GM13976 (cell line): ENCODE measurements at regions of chr14 and their contacts with region 1.

Region 1: DNA sequence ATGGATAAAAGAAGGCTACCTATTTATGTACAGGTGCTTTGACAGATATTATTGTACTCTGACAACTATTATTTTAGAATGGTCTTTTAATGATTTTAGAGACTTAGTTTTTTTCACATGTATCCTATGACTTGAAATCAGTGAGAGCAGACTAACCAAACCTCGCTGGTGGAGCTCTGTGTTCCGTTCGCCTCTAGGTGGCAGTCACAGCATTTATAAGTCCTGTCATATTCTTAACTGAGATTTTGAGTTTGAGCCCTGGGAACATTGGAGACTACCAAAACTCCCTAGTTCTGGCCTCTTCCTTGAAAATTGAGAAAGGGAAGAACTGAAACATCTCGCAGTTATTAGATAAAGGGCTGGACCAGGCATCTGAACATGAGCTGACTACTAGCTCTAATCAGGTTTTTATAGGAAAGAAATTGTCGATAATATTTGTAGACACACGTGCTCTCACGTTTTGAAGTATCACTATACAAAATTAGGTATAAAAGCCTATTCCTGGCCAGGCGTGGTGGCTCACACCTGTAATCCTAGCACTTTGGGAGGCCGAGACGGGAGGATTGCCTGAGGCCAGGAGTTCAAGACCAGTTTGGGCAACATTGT is 48.3 kb downstream of the TTLL5 start:
- DNase-seq: peak; percentile 57
- CTCF ChIP-seq: peak; percentile 72

Region 2: GRCh38 chr14:75315144-75315543 is 394.2 kb before region 1 on chr14:
- in situ Hi-C with region 1: no loop called
- DNase-seq: no peak
- CTCF ChIP-seq: no peak

Region 3: GRCh38 chr14:75654127-75654732 is 55.1 kb before region 1 on chr14:
- in situ Hi-C with region 1: no loop called
- DNase-seq: peak; percentile 78
- CTCF ChIP-seq: peak; percentile 89

Region 4: DNA sequence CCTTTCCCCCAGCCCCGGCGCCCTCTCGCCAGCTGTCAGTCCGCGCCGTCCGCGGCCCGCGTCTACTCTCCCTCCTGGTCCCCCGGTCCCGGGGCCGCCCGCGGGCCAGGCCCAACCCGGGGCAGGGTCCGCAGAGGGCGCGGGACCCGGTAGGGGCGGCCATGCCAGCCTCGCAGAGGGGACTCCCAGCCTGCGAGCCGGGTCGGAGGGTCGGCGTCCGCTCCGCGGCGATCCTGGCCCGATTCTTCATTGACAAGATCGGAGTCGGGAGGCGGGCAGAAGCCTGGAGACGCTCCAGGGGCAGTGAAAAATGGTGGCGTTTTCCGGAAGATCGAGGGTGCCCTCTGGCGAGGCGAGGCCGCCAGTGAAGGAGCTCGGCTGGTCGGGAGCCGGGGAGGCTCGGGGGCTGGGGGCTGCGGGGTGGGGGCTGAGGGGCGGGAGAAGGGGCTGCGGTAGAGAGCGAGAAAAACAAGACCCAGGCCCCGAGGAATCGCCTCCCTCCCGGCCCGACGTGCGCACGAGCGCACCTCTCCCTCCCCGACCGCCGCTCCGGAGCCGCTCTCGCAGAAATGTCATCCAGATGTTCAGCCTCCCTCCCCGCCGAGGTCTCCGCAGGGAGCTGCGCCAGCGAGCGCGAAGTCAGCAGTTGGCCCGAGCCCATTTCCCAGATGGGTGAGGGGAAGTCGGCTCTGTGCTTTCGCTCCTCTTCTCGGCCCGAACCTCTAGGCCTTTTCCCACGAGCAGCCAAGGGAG is 273.1 kb after region 1 on chr14:
- in situ Hi-C with region 1: loop called (anchors 10 kb)
- DNase-seq: peak; percentile 86
- CTCF ChIP-seq: peak; percentile 84

Region 5: GRCh38 chr14:76146976-76147375 is 437.7 kb after region 1 on chr14:
- in situ Hi-C with region 1: no loop called
- DNase-seq: no peak
- CTCF ChIP-seq: no peak